A549 (cell line): ENCODE measurements at regions of chr13 and their contacts with region 1.

Region 1: GRCh38 chr13:46721054-46721453 is 75.9 kb downstream of the ESD start:
- DNase-seq: peak; percentile 6 to 31
- ATAC-seq: no peak
- H3K4me3 ChIP-seq: no peak overlapping the region
- H3K27ac ChIP-seq: no peak overlapping the region
- H3K4me1 ChIP-seq: peaks cover 13% of the 10 kb centered on the region; the same call in 2 of the 3 replicates
- CTCF ChIP-seq: peak; percentile 77
- EP300 ChIP-seq: no peak
- POLR2A ChIP-seq: no peak
- RAD21 ChIP-seq: peak; percentile 85 to 89

Region 2: GRCh38 chr13:46492946-46493345 is 228.1 kb before region 1 on chr13:
- CTCF ChIA-PET with region 1: interaction called, 17 read pairs
- POLR2A ChIA-PET with region 1: no interaction called
- DNase-seq: peak; percentile 11 to 43
- ATAC-seq: peak in 1 of 2 experiments; percentile 54; a peak in 2 of 6 replicates
- H3K4me3 ChIP-seq: no peak overlapping the region
- H3K27ac ChIP-seq: no peak overlapping the region
- H3K4me1 ChIP-seq: 0 out of 3 replicates have a peak, but pooled peaks cover 6% of the 10 kb centered on the region
- CTCF ChIP-seq: peak; percentile 72
- EP300 ChIP-seq: no peak
- POLR2A ChIP-seq: no peak
- RAD21 ChIP-seq: peak; percentile 80 to 83

Region 3: GRCh38 chr13:46552889-46553510 is 168.1 kb before region 1 on chr13 and contains the start of gene LRCH1:
- CTCF ChIA-PET with region 1: interaction called, 63 read pairs
- POLR2A ChIA-PET with region 1: no interaction called
- DNase-seq: peak; percentile 66 to 87
- ATAC-seq: peak; percentile 87 to 91
- H3K4me3 ChIP-seq: peak within 1 kb of the TSS; percentile 92
- H3K27ac ChIP-seq: peak within 1 kb of the TSS; percentile 89 to 95
- H3K4me1 ChIP-seq: peaks cover 27% of the 10 kb centered on the region
- CTCF ChIP-seq: no peak
- EP300 ChIP-seq: no peak
- POLR2A ChIP-seq: peak; percentile 22; the same call in 1 of the 2 replicates
- RAD21 ChIP-seq: peak in 1 of 2 experiments; percentile 16; a peak in 1 of 5 replicates
- polyA plus RNA-seq, gene LRCH1: 16.4 and 21.9 TPM in 2 replicates

Region 4: GRCh38 chr13:46603165-46603603 is 117.9 kb before region 1 on chr13:
- CTCF ChIA-PET with region 1: interaction called, 14 read pairs
- POLR2A ChIA-PET with region 1: no interaction called
- DNase-seq: peak; percentile 22 to 48
- ATAC-seq: peak in 1 of 2 experiments; percentile 52; a peak in 2 of 6 replicates
- H3K4me3 ChIP-seq: no peak overlapping the region
- H3K27ac ChIP-seq: peak overlapping the region; percentile 83 to 96; a peak in 5 of 6 replicates
- H3K4me1 ChIP-seq: peaks cover 78% of the 10 kb centered on the region
- CTCF ChIP-seq: peak; percentile 39
- EP300 ChIP-seq: no peak
- POLR2A ChIP-seq: no peak
- RAD21 ChIP-seq: peak; percentile 46 to 49

Region 5: GRCh38 chr13:46731523-46731922 is 10.5 kb after region 1 on chr13:
- CTCF ChIA-PET with region 1: interaction called, 14 read pairs
- POLR2A ChIA-PET with region 1: no interaction called
- DNase-seq: no peak
- ATAC-seq: no peak
- H3K4me3 ChIP-seq: no peak overlapping the region
- H3K27ac ChIP-seq: no peak overlapping the region
- H3K4me1 ChIP-seq: no peaks in the 10 kb centered on the region
- CTCF ChIP-seq: no peak
- EP300 ChIP-seq: no peak
- POLR2A ChIP-seq: no peak
- RAD21 ChIP-seq: no peak